Testis (tissue), 5 donors: ENCODE measurements at regions of chr17 and their contacts with region 1.

Region 1: DNA sequence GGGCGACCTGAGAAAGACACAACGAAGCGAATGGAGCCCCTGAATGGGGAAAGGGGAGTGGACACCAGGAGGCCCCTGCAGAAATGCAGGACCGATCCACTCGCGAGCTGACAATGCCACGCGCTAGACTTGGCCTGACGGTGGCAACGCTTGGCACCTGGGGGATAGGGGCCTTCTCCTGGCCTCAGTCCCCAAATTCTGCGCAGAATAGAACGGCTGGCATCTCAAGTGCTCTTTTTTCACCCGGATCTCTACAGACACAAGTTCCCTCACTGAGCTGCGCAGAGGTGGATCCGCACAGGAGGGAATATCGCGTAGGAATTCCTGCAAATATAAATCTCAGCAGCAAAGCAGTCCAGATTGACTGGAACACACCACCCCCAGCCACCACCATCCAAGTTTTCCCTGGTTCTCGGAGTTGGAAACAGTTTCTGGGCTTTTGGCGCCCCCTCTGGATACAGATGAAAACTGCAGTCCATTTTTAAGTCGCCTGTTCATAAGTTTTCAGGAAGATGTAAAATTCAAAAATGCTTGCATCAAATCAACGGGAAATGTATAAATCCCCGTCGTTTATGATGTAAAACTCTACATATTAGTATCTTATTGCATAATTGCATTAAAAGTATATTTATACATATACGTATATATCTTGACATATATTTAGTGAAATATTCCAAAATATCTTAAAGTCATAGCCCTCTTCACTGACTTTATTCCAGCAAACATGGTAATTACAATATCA is 2.3 kb upstream of the SOX9 start:
- DNase-seq: peak; percentile 91
- H3K4me3 ChIP-seq: peak overlapping the region; percentile 44 to 60
- H3K27ac ChIP-seq: peak overlapping the region; percentile 76 to 77
- H3K4me1 ChIP-seq: peaks cover 14% of the 10 kb centered on the region
- H3K27me3 ChIP-seq: no peaks in the 10 kb centered on the region
- CTCF ChIP-seq: peak; percentile 89 to 95 (median 91)
- POLR2A ChIP-seq: no peak

Region 2: DNA sequence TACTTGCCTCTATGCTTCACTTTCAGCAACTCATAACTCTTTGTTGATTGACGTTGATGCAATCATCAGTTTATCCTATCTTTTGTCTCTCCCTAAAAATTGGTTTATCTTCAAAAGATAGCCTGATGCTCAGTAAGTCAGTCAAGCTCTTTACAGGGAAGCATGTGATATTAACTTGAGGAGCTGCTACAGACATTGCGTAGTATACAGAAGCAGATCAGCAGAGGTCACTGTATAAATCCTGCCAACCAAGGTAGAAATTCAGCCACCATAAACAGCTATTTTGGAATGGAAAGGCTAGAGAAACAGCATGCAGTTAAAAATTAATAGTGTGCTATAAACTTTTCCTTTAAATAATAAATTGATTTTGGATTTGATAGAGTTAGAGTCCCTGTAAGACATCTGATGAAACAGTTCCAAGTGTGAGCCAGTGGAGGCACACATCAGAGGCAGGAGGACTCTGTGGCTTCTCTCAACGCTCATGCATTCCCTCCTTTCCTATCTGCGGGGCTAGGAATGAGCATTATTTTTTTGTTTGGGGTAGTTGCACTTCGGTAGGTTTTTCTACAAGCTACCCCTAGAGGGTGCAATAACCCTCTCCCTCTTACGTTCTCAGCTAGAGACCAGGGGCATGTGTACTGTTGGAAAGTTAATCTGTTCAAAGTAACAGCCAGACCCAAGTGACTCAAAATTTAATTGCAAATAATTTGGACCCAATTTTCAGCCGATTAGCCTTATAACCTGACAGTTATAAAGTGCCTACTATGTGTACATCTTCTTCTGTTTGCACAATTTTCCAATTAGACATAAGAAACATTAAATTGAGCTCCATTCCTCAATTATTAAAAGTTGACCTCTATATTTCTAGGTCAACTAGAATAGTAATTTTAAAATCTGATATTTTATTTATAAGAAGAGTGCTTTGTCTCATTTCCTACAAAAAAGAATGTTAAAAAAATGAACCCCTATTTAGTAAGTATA is 645.4 kb before region 1 on chr17:
- intact Hi-C with region 1: loop called (anchors 10 kb)
- DNase-seq: peak; percentile 44
- H3K4me3 ChIP-seq: no peak overlapping the region
- H3K27ac ChIP-seq: no peak overlapping the region
- H3K4me1 ChIP-seq: peaks cover 13% of the 10 kb centered on the region
- H3K27me3 ChIP-seq: no peaks in the 10 kb centered on the region
- CTCF ChIP-seq: peak; percentile 29 to 62 (median 42)
- POLR2A ChIP-seq: no peak